ENCODE measurements at regions of chr2 and their contacts with region 1.

Region 1: GRCh38 chr2:174442546-174443510 is 44.0 kb downstream of the GPR155 start:
- DNase-seq: peak; percentile 18
- ATAC-seq: peak; percentile 81
- H3K4me3 ChIP-seq: no peak overlapping the region
- H3K27ac ChIP-seq: no peak overlapping the region
- H3K4me1 ChIP-seq: peaks cover 5% of the 10 kb centered on the region
- H3K27me3 ChIP-seq: no peaks in the 10 kb centered on the region
- CTCF ChIP-seq: peak; percentile 65

Region 2: DNA sequence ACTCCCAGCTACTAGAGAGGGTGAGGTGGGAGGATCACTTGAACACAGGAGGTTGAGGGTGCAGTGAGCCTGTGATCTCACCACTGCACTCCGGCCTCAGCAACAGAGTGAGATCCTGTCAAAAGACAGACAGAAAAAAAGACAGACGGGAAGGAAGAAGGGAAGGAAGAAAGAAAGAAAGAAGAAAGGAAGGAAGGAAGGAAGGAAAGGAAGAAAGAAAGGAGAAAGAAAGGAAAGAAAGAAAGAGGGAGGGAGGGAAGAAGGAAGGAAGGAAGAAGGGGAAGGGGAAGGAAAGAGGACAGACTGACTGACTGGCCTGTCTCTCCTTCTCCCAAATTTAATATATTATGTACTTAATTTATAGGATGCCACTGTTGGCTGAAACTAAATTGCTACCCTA is 86.5 kb before region 1 on chr2:
- CTCF ChIA-PET with region 1: no interaction called
- POLR2A ChIA-PET with region 1: no interaction called
- in situ Hi-C with region 1: no loop called
- intact Hi-C with region 1: loop called (anchors 5 kb)
- DNase-seq: no peak
- ATAC-seq: no peak
- H3K4me3 ChIP-seq: no peak overlapping the region
- H3K27ac ChIP-seq: no peak overlapping the region
- H3K4me1 ChIP-seq: no peaks in the 10 kb centered on the region
- H3K27me3 ChIP-seq: no peaks in the 10 kb centered on the region
- CTCF ChIP-seq: no peak

Measured in Panc1 (cell line).